ENCODE measurements at regions of chr4 and their contacts with region 1.

Region 1: GRCh38 chr4:10164877-10165283 is 48.3 kb upstream of the WDR1 start:
- DNase-seq: peak; percentile 64

Region 2: DNA sequence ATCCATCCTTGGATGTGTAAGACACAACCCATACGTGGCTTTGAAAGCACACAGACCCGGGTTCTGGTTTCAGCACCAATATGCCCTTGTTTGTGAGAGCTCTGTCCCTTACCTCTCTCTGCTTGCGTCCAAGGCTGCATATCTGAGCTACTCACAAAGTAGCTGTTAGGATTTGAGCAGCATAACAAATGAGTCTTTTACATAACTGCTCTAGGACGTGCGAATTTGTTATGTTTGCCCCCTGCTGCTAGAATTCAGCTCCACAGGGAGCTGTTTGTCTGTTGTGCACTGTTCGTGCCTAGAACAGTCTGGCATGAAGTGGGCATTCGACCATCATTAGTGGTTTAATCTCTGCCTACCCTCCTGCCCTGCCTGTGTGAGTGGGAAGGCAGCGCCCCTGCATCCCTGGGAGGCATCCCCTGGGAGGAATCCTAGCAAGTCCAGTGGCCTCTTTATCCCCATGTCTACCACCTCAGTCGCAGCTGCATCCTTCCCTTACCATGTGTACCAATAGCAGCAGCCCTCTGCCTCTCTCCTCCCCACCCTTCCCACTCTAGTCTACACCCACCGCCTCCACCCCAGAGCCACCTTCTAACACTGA is 185.7 kb before region 1 on chr4:
- in situ Hi-C with region 1: no loop called
- DNase-seq: no peak

Region 3: GRCh38 chr4:10403633-10404445 is 239.0 kb after region 1 on chr4:
- in situ Hi-C with region 1: loop called (anchors 10 kb)
- DNase-seq: peak; percentile 55